Ascending aorta (tissue), 2 donors: ENCODE measurements at regions of chr14 and their contacts with region 1.

Region 1: GRCh38 chr14:90697577-90698206 is 118.5 kb downstream of the TTC7B start:
- DNase-seq: peak; percentile 50 to 92
- H3K4me3 ChIP-seq: peak overlapping the region in 1 of 2 donors; percentile 28
- H3K27ac ChIP-seq: peak overlapping the region; percentile 76 to 86
- H3K4me1 ChIP-seq: peaks cover 12 to 25% of the 10 kb centered on the region in 2 donors
- H3K27me3 ChIP-seq: no peaks in the 10 kb centered on the region
- CTCF ChIP-seq: peak; percentile 88 to 97 (median 95)

Region 2: GRCh38 chr14:90301668-90302090 is 396.0 kb before region 1 on chr14:
- intact Hi-C with region 1: loop called (anchors 2 kb)
- DNase-seq: no peak
- H3K4me3 ChIP-seq: no peak overlapping the region
- H3K27ac ChIP-seq: peak overlapping the region; percentile 37 to 40
- H3K4me1 ChIP-seq: peaks cover 0 to 14% of the 10 kb centered on the region in 2 donors
- H3K27me3 ChIP-seq: no peaks in the 10 kb centered on the region
- CTCF ChIP-seq: peak in 2 of 3 experiments; percentile 52 to 63

Region 3: DNA sequence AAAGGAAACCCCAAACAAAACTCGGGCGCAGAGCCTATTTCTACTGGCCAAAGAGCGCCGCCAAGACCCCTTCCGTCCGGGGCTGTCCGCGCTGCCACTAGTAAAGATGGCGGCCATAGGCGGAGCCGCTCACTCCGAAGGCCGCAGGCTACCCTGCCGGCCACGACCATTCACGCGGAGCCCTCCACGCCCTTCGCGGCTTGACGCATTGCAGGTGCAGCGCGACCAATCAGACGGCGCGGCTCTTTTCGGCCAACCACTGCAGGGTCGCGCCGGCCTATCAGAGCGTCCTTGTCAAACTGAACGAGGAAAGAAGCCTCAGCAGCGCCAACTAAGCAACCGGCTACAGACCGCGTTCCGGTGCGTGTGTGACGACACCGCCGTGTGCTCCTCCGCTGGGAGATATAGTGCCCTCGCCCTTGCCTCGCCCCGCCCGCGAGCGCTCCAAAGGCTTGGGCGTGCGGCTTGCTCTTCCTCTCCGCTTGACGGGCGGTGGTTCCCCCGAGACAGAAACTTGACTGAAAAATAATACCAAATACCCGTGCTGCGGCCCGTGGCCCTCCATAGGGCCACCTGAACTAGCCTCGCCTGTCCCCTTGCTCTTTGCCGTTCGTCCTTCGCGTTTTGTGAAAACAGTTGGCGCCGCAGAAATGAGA is 314.5 kb before region 1 on chr14:
- intact Hi-C with region 1: loop called (anchors 5 kb)
- DNase-seq: peak; percentile 97 to 100
- H3K4me3 ChIP-seq: peak overlapping the region; percentile 72 to 75
- H3K27ac ChIP-seq: peak overlapping the region; percentile 100
- H3K4me1 ChIP-seq: peaks cover 0 to 16% of the 10 kb centered on the region in 2 donors
- H3K27me3 ChIP-seq: no peaks in the 10 kb centered on the region
- CTCF ChIP-seq: peak in 1 of 3 experiments; percentile 9

Region 4: GRCh38 chr14:90419200-90419599 is 278.5 kb before region 1 on chr14:
- intact Hi-C with region 1: loop called (anchors 5 kb)
- DNase-seq: peak; percentile 68 to 96
- H3K4me3 ChIP-seq: no peak overlapping the region
- H3K27ac ChIP-seq: peak overlapping the region; percentile 52 to 79
- H3K4me1 ChIP-seq: peaks cover 0 to 13% of the 10 kb centered on the region in 2 donors
- H3K27me3 ChIP-seq: no peaks in the 10 kb centered on the region
- CTCF ChIP-seq: no peak

Region 5: GRCh38 chr14:90522571-90523191 is 175.0 kb before region 1 on chr14:
- intact Hi-C with region 1: loop called (anchors 10 kb)
- DNase-seq: peak in 1 of 2 donors; percentile 80
- H3K4me3 ChIP-seq: peak overlapping the region in 1 of 2 donors; percentile 1
- H3K27ac ChIP-seq: peak overlapping the region; percentile 71 to 83
- H3K4me1 ChIP-seq: peaks cover 16 to 39% of the 10 kb centered on the region in 2 donors
- H3K27me3 ChIP-seq: no peaks in the 10 kb centered on the region
- CTCF ChIP-seq: no peak

Region 6: DNA sequence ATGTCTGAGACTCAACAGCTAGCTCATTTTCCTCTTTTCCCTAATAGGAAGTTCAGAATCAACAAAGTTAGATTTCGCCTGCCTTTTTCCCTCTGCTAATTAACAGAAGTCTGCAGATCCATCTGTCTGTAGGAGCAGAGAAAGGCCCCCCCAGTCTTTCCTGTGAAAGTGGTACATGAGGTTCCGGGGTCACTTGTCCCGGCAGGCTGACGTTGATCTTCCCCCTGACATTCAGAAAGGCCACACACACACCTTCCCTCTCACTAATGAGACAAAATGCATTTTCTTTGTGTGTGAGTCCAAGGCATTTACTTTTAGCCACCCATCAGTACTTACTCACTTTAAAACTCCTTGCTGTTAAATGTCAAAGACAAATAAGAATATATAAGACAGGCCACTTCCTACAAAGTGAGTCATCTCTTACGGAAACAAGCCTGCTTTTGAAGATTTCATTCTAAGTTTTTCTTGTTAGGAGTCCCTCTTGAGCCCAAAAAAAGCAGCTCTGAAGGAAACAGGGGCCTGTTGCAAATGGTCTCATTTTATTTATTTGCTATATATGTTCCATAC is 20.1 kb before region 1 on chr14:
- intact Hi-C with region 1: loop called (anchors 2 kb)
- DNase-seq: no peak
- H3K4me3 ChIP-seq: no peak overlapping the region
- H3K27ac ChIP-seq: peak overlapping the region; percentile 77 to 92
- H3K4me1 ChIP-seq: peaks cover 8 to 20% of the 10 kb centered on the region in 2 donors
- H3K27me3 ChIP-seq: no peaks in the 10 kb centered on the region
- CTCF ChIP-seq: no peak

Region 7: GRCh38 chr14:90815822-90816700 is 118.4 kb after region 1 on chr14 and contains the start of gene TTC7B:
- intact Hi-C with region 1: loop called (anchors 5 kb)
- DNase-seq: no peak
- H3K4me3 ChIP-seq: peak within 1 kb of the TSS; percentile 93
- H3K27ac ChIP-seq: no peak within 1 kb of the TSS
- H3K4me1 ChIP-seq: peaks cover 0 to 6% of the 10 kb centered on the region in 2 donors
- H3K27me3 ChIP-seq: no peaks in the 10 kb centered on the region
- CTCF ChIP-seq: peak; percentile 24 to 45 (median 26)
- total RNA-seq, gene TTC7B: 18.5 TPM